Activated CD8-positive, alpha-beta memory T cell treated with anti-CD3 and anti-CD28 coated beads, Interleukin-2, amount 10 ng/mL, durations not matched to agents 7 days and 5 days (primary cell): ENCODE measurements at regions of chr4 and their contacts with region 1.

Region 1: GRCh38 chr4:37836838-37837440 is 10.5 kb downstream of the PGM2 start:
- DNase-seq: no peak
- ATAC-seq: peak; percentile 30
- H3K4me3 Mint-ChIP-seq: no peak overlapping the region
- H3K27ac Mint-ChIP-seq: peak overlapping the region; percentile 53
- H3K4me1 Mint-ChIP-seq: peaks cover 26% of the 10 kb centered on the region
- H3K27me3 Mint-ChIP-seq: no peaks in the 10 kb centered on the region

Region 2: GRCh38 chr4:37826295-37827029 is 10.5 kb before region 1 on chr4 and contains the start of gene PGM2:
- CTCF ChIA-PET with region 1: interaction called, 10 read pairs
- DNase-seq: peak; percentile 93
- ATAC-seq: peak; percentile 99
- H3K4me3 Mint-ChIP-seq: peak within 1 kb of the TSS; percentile 93
- H3K27ac Mint-ChIP-seq: peak within 1 kb of the TSS; percentile 89
- H3K4me1 Mint-ChIP-seq: peaks cover 36% of the 10 kb centered on the region
- H3K27me3 Mint-ChIP-seq: no peaks in the 10 kb centered on the region
- total RNA-seq, gene PGM2: 38.6 to 49.0 TPM